Naive thymus-derived CD4-positive, alpha-beta T cell (primary cell): ENCODE measurements at regions of chr11 and their contacts with region 1.

Region 1: DNA sequence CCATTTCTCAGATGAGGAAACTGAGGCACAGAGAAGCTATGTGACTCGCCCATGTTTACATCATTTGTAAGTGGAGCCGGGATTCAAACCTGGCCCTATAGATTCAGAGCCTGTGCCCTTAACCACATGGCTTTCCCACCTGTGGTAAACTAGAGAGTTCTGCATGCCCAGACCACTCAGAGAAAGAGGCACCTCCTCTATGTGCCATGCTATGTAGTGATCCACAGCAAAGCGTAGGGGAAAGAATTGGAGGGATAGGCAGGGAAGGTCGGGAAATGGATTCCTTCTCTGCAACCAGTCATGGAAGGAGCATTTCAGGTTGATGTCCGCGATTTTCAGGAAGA is 15.4 kb upstream of the POU2AF2 start:
- DNase-seq: no peak
- ATAC-seq: peak; percentile 48
- H3K4me3 ChIP-seq: peak overlapping the region; percentile 49
- H3K4me3 Mint-ChIP-seq: peak overlapping the region; percentile 23 to 81 (median 58)
- H3K27ac ChIP-seq: no peak overlapping the region
- H3K27ac Mint-ChIP-seq: no peak overlapping the region
- H3K4me1 ChIP-seq: no peaks in the 10 kb centered on the region
- H3K4me1 Mint-ChIP-seq: peaks cover 0 to 24% (median 16%) of the 10 kb centered on the region in 7 donors
- H3K27me3 ChIP-seq: no peaks in the 10 kb centered on the region
- H3K27me3 Mint-ChIP-seq: peaks cover 20 to 27% (median 27%) of the 10 kb centered on the region in 5 donors

Region 2: GRCh38 chr11:110173811-110174644 is 1056.1 kb before region 1 on chr11:
- CTCF ChIA-PET with region 1: no interaction called
- POLR2A ChIA-PET with region 1: no interaction called
- intact Hi-C with region 1: loop called in 1 of 2 experiments (anchors 1 kb)
- DNase-seq: peak in 8 of 9 donors; percentile 22 to 65 (median 44)
- ATAC-seq: peak; percentile 87
- H3K4me3 ChIP-seq: peak overlapping the region; percentile 17
- H3K4me3 Mint-ChIP-seq: peak overlapping the region; percentile 40 to 80 (median 62)
- H3K27ac ChIP-seq: no peak overlapping the region
- H3K27ac Mint-ChIP-seq: no peak overlapping the region
- H3K4me1 ChIP-seq: no peaks in the 10 kb centered on the region
- H3K4me1 Mint-ChIP-seq: peaks cover 0 to 8% (median 7%) of the 10 kb centered on the region in 7 donors
- H3K27me3 ChIP-seq: no peaks in the 10 kb centered on the region
- H3K27me3 Mint-ChIP-seq: peaks cover 6 to 34% (median 15%) of the 10 kb centered on the region in 5 donors

Region 3: DNA sequence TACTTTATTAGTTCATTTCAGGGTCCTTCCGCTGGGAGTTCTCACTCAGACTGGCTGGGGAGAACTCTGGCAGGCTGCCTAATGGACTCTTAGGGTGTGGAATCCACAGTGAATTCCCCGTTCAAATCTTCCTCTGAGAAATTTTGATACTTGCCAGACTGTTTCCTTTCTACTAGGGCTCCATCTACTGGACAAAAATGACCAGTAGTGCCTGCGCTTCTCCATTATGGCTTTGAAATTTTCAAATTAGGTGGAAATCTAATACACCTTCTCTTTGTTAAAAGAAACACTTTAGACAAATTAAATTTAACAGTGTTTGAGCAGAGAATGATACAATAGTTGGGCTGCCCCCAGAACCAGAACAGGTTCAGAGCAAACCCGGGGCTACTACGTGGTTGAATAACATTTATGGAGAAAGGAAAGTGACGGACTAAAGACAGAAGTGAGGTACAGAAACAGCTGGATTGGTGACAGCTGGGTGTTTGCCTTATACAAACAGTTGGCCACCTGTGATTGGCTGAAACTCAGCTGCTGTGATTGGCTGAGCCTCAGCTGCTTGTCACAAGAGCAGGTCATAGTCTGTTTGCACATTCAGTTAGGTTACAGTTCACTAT is 853.3 kb before region 1 on chr11:
- CTCF ChIA-PET with region 1: no interaction called
- POLR2A ChIA-PET with region 1: no interaction called
- intact Hi-C with region 1: loop called in 1 of 2 experiments (anchors 5 kb)
- DNase-seq: peak in 7 of 9 donors; percentile 13 to 45 (median 22)
- ATAC-seq: peak; percentile 68
- H3K4me3 ChIP-seq: no peak overlapping the region
- H3K4me3 Mint-ChIP-seq: no peak overlapping the region
- H3K27ac ChIP-seq: no peak overlapping the region
- H3K27ac Mint-ChIP-seq: no peak overlapping the region
- H3K4me1 ChIP-seq: no peaks in the 10 kb centered on the region
- H3K4me1 Mint-ChIP-seq: peaks cover 0 to 27% (median 5%) of the 10 kb centered on the region in 7 donors
- H3K27me3 ChIP-seq: no peaks in the 10 kb centered on the region
- H3K27me3 Mint-ChIP-seq: peaks cover 0 to 6% (median 4%) of the 10 kb centered on the region in 5 donors

Region 4: GRCh38 chr11:110447897-110448745 is 782.0 kb before region 1 on chr11:
- CTCF ChIA-PET with region 1: interaction called, 5 read pairs
- POLR2A ChIA-PET with region 1: no interaction called
- intact Hi-C with region 1: loop called (anchors 1 kb)
- DNase-seq: peak in 3 of 9 donors; percentile 29 to 34 (median 31)
- ATAC-seq: peak; percentile 36
- H3K4me3 ChIP-seq: no peak overlapping the region
- H3K4me3 Mint-ChIP-seq: no peak overlapping the region
- H3K27ac ChIP-seq: no peak overlapping the region
- H3K27ac Mint-ChIP-seq: no peak overlapping the region
- H3K4me1 ChIP-seq: no peaks in the 10 kb centered on the region
- H3K4me1 Mint-ChIP-seq: peaks cover 22 to 37% (median 33%) of the 10 kb centered on the region in 7 donors
- H3K27me3 ChIP-seq: no peaks in the 10 kb centered on the region
- H3K27me3 Mint-ChIP-seq: no peaks in the 10 kb centered on the region

Region 5: GRCh38 chr11:110711776-110712658 is 518.1 kb before region 1 on chr11 and contains the start of gene ARHGAP20:
- CTCF ChIA-PET with region 1: no interaction called
- POLR2A ChIA-PET with region 1: no interaction called
- intact Hi-C with region 1: loop called (anchors 10 kb)
- DNase-seq: peak in 8 of 9 donors; percentile 1 to 64 (median 19)
- ATAC-seq: peak; percentile 84
- H3K4me3 ChIP-seq: peak within 1 kb of the TSS; percentile 43
- H3K4me3 Mint-ChIP-seq: peak within 1 kb of the TSS; percentile 70 to 86 (median 76)
- H3K27ac ChIP-seq: no peak within 1 kb of the TSS
- H3K27ac Mint-ChIP-seq: no peak within 1 kb of the TSS
- H3K4me1 ChIP-seq: peaks cover 3 to 7% of the 10 kb centered on the region in 2 donors
- H3K4me1 Mint-ChIP-seq: peaks cover 13 to 28% (median 19%) of the 10 kb centered on the region in 7 donors
- H3K27me3 ChIP-seq: peaks cover 3 to 11% of the 10 kb centered on the region in 2 donors
- H3K27me3 Mint-ChIP-seq: peaks cover 62 to 71% (median 66%) of the 10 kb centered on the region in 5 donors
- total RNA-seq, gene ARHGAP20: 0.08 to 0.11 TPM in 2 of 5 experiments, not detected in the others